Sciatic nerve (tissue), 2 donors: ENCODE measurements at regions of chr2 and their contacts with region 1.

Region 1: DNA sequence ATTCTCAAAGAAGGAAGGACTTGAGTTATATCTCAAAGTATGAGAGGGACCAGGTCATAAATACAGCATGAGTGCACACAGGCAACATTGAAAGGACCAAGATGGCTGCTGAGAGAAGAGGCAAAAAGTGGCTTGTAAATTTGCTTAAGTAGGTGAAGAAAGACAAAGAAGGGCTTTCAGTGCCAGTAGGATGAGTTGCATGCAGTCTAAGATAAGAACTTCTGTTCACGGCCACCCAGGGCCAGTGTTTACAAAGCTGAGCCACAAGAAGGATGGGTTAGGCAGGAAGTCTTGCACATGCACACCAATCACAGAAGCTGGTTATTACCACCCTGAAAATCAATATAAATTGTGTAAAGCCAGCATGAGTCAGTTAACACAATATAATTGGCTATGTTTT is 3.1 kb upstream of the ABCB11 start:
- DNase-seq: no peak
- ATAC-seq: no peak

Region 2: DNA sequence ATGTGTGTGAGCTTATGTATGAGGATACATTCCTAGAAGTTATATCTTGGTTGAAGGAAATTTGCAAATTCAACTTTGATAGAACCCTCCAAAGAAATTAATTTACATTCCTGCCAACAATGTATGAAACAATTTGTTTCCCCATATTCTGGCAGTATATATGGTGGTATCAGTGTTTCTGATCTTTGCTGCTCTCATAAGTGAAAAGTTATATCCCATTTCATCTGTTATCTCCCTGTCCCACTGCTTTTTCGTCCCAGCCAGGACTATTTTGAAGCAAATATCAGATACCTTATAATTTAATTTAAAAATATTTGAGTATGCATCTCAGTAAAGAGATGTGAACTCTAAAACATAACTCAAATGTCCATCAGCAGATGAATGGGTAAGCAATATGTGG is 800.1 kb after region 1 on chr2:
- intact Hi-C with region 1: loop called (anchors 5 kb)
- DNase-seq: no peak
- ATAC-seq: no peak

Region 3: GRCh38 chr2:170605862-170606261 is 1571.6 kb after region 1 on chr2:
- intact Hi-C with region 1: no loop called
- DNase-seq: no peak
- ATAC-seq: no peak